ENCODE measurements at regions of chr19 and their contacts with region 1.

Region 1: GRCh38 chr19:28425046-28425931 is 787.7 kb downstream of the UQCRFS1 start:
- DNase-seq: no peak
- ATAC-seq: no peak
- H3K4me3 ChIP-seq: no peak overlapping the region
- H3K27ac ChIP-seq: no peak overlapping the region
- H3K4me1 ChIP-seq: no peaks in the 10 kb centered on the region
- H3K27me3 ChIP-seq: no peaks in the 10 kb centered on the region
- CTCF ChIP-seq: no peak
- EP300 ChIP-seq: no peak
- POLR2A ChIP-seq: no peak
- RAD21 ChIP-seq: no peak

Region 2: GRCh38 chr19:28436320-28436719 is 11.0 kb after region 1 on chr19:
- CTCF ChIA-PET with region 1: interaction called, 6 read pairs
- POLR2A ChIA-PET with region 1: interaction called, 3 read pairs
- RAD21 ChIA-PET with region 1: interaction called, 11 read pairs
- SMC1A ChIA-PET with region 1: interaction called, 4 read pairs
- in situ Hi-C with region 1: no loop called
- intact Hi-C with region 1: no loop called
- DNase-seq: no peak
- ATAC-seq: no peak
- H3K4me3 ChIP-seq: no peak overlapping the region
- H3K27ac ChIP-seq: no peak overlapping the region
- H3K4me1 ChIP-seq: no peaks in the 10 kb centered on the region
- H3K27me3 ChIP-seq: no peaks in the 10 kb centered on the region
- CTCF ChIP-seq: no peak
- EP300 ChIP-seq: no peak
- POLR2A ChIP-seq: no peak
- RAD21 ChIP-seq: no peak

Measured in GM12878 (cell line).